ENCODE measurements at regions of chr3 and their contacts with region 1.

Region 1: GRCh38 chr3:58177747-58178527 is 32.8 kb downstream of the DNASE1L3 start:
- DNase-seq: peak; percentile 90
- ATAC-seq: peak; percentile 96
- H3K4me3 ChIP-seq: peak overlapping the region in 4 of 5 experiments; percentile 38 to 66 (median 56)
- H3K4me3 Mint-ChIP-seq: peak overlapping the region; percentile 86
- H3K27ac ChIP-seq: no peak overlapping the region
- H3K27ac Mint-ChIP-seq: peak overlapping the region; percentile 50
- H3K4me1 ChIP-seq: peaks cover 19 to 24% of the 10 kb centered on the region in 2 donors
- H3K4me1 Mint-ChIP-seq: peaks cover 27% of the 10 kb centered on the region
- H3K27me3 ChIP-seq: peaks cover 0 to 8% (median 3%) of the 10 kb centered on the region in 4 experiments
- H3K27me3 Mint-ChIP-seq: no peaks in the 10 kb centered on the region
- CTCF ChIP-seq: peak; percentile 88

Region 2: GRCh38 chr3:57752307-57752706 is 425.6 kb before region 1 on chr3:
- CTCF ChIA-PET with region 1: no interaction called
- POLR2A ChIA-PET with region 1: no interaction called
- intact Hi-C with region 1: no loop called
- DNase-seq: no peak
- ATAC-seq: no peak
- H3K4me3 ChIP-seq: no peak overlapping the region
- H3K4me3 Mint-ChIP-seq: no peak overlapping the region
- H3K27ac ChIP-seq: no peak overlapping the region
- H3K27ac Mint-ChIP-seq: no peak overlapping the region
- H3K4me1 ChIP-seq: peaks cover 7 to 10% of the 10 kb centered on the region in 2 donors
- H3K4me1 Mint-ChIP-seq: peaks cover 11% of the 10 kb centered on the region
- H3K27me3 ChIP-seq: no peaks in the 10 kb centered on the region
- H3K27me3 Mint-ChIP-seq: no peaks in the 10 kb centered on the region
- CTCF ChIP-seq: no peak

Region 3: DNA sequence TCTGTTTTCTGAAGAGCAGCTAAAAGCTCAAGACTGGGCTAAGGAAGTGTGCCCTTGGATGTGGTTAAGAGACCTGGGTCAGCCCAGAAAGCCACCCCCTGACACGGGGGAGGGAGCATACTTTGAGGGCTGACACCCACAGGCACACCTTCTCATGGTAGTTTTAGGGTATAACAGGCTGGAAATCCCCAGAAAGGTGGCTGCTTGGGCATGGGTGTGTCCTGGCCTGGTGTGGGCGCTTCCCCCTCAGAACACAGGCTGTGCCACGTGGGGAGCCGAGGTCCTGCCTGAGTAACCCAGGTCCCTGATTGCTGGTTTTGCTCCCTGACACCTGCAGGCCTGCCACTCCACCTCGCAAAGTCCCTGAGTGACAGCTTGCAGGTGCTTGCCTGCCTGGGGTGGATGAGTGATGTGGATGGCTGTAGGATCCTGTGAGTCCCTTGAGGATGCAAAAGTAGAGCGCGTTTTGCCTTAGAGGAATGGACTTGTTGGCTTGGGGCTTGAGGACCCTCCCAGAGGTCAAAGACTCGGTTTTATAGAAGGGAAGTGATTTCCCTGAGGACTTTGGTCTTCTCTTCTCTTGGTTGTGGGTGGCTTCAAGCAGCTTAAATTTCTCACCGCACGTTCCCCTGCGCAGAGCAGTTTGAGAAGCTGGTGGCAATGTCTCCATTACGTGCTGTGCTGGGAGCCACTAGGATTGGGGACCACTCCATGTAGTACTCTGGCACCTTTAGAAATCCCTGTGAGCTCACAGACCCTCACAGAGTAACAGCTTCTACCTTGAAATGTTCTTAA is 61.6 kb before region 1 on chr3:
- CTCF ChIA-PET with region 1: no interaction called
- POLR2A ChIA-PET with region 1: no interaction called
- intact Hi-C with region 1: loop called (anchors 10 kb)
- DNase-seq: peak; percentile 95
- ATAC-seq: peak; percentile 93
- H3K4me3 ChIP-seq: peak overlapping the region in 1 of 5 experiments; percentile 1
- H3K4me3 Mint-ChIP-seq: peak overlapping the region; percentile 77
- H3K27ac ChIP-seq: peak overlapping the region; percentile 80 to 89
- H3K27ac Mint-ChIP-seq: peak overlapping the region; percentile 95
- H3K4me1 ChIP-seq: peaks cover 62 to 74% of the 10 kb centered on the region in 2 donors
- H3K4me1 Mint-ChIP-seq: peaks cover 73% of the 10 kb centered on the region
- H3K27me3 ChIP-seq: no peaks in the 10 kb centered on the region
- H3K27me3 Mint-ChIP-seq: no peaks in the 10 kb centered on the region
- CTCF ChIP-seq: no peak

Region 4: DNA sequence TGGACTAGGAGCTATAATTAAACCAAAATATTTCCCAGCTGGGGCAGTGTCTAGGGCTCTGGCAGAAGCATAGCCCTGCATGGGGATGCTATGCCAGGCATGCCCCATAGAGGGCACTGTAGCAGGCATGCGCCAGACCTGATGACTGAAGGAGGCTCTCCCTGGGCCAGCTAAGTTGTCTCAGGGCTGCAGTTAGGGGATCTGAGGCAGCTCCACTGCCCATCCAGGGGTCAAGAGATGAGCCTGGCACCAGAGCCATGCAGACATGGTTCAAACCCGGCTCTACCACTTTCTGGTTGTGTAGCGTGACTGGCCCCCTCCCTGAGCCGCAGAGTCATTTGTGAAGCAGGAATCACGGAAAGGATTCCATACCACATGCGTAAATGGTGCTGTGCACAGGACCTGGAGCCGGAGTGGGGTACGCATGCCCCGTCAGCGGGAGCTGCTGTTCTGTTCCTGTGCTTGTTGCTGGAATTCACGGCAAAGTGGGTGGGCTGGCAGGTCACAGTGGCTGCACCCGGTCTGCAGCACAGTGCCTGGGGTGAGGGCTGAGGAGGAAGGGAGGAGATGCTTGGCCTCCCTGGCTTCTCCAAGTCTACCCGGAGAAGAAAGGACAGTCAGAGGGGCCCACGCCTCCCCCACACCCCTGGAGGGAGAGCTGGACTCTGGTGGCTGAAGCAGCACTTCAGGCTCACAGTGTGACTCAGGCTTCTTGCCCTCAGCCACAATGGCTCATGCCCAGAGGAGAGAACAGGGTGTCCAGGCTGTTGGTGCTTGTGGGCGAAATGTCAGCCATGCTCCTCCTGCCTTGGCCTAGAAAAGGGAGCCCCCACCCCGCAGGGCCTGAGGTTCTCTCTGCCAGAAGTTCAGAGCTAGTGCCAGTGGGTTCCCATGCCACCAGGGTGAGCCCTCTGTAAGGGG is 10.2 kb before region 1 on chr3:
- CTCF ChIA-PET with region 1: interaction called, 25 read pairs
- POLR2A ChIA-PET with region 1: no interaction called
- intact Hi-C with region 1: no loop called
- DNase-seq: peak; percentile 57
- ATAC-seq: peak; percentile 67
- H3K4me3 ChIP-seq: no peak overlapping the region
- H3K4me3 Mint-ChIP-seq: no peak overlapping the region
- H3K27ac ChIP-seq: no peak overlapping the region
- H3K27ac Mint-ChIP-seq: no peak overlapping the region
- H3K4me1 ChIP-seq: no peaks in the 10 kb centered on the region
- H3K4me1 Mint-ChIP-seq: no peaks in the 10 kb centered on the region
- H3K27me3 ChIP-seq: no peaks in the 10 kb centered on the region
- H3K27me3 Mint-ChIP-seq: no peaks in the 10 kb centered on the region
- CTCF ChIP-seq: peak; percentile 79

Region 5: GRCh38 chr3:58217209-58217811 is 39.4 kb after region 1 on chr3:
- CTCF ChIA-PET with region 1: interaction called, 336 read pairs
- POLR2A ChIA-PET with region 1: interaction called, 6 read pairs
- intact Hi-C with region 1: loop called (anchors 5 kb)
- DNase-seq: peak; percentile 84
- ATAC-seq: peak; percentile 60
- H3K4me3 ChIP-seq: peak overlapping the region in 4 of 5 experiments; percentile 34 to 61 (median 48)
- H3K4me3 Mint-ChIP-seq: peak overlapping the region; percentile 79
- H3K27ac ChIP-seq: peak overlapping the region in 1 of 2 donors; percentile 52
- H3K27ac Mint-ChIP-seq: peak overlapping the region; percentile 69
- H3K4me1 ChIP-seq: peaks cover 52 to 58% of the 10 kb centered on the region in 2 donors
- H3K4me1 Mint-ChIP-seq: peaks cover 49% of the 10 kb centered on the region
- H3K27me3 ChIP-seq: no peaks in the 10 kb centered on the region
- H3K27me3 Mint-ChIP-seq: no peaks in the 10 kb centered on the region
- CTCF ChIP-seq: peak; percentile 97

Region 6: GRCh38 chr3:58299839-58300516 is 122.0 kb after region 1 on chr3:
- CTCF ChIA-PET with region 1: interaction called, 334 read pairs
- POLR2A ChIA-PET with region 1: no interaction called
- intact Hi-C with region 1: no loop called
- DNase-seq: peak; percentile 50
- ATAC-seq: no peak
- H3K4me3 ChIP-seq: no peak overlapping the region
- H3K4me3 Mint-ChIP-seq: no peak overlapping the region
- H3K27ac ChIP-seq: no peak overlapping the region
- H3K27ac Mint-ChIP-seq: no peak overlapping the region
- H3K4me1 ChIP-seq: no peaks in the 10 kb centered on the region
- H3K4me1 Mint-ChIP-seq: no peaks in the 10 kb centered on the region
- H3K27me3 ChIP-seq: no peaks in the 10 kb centered on the region
- H3K27me3 Mint-ChIP-seq: no peaks in the 10 kb centered on the region
- CTCF ChIP-seq: peak; percentile 65

Region 7: GRCh38 chr3:58532794-58533220 is 354.9 kb after region 1 on chr3:
- CTCF ChIA-PET with region 1: interaction called, 3 read pairs
- POLR2A ChIA-PET with region 1: no interaction called
- intact Hi-C with region 1: loop called (anchors 1 kb)
- DNase-seq: peak; percentile 89
- ATAC-seq: peak; percentile 99
- H3K4me3 ChIP-seq: no peak overlapping the region
- H3K4me3 Mint-ChIP-seq: no peak overlapping the region
- H3K27ac ChIP-seq: no peak overlapping the region
- H3K27ac Mint-ChIP-seq: peak overlapping the region; percentile 7
- H3K4me1 ChIP-seq: peaks cover 6 to 8% of the 10 kb centered on the region in 2 donors
- H3K4me1 Mint-ChIP-seq: peaks cover 6% of the 10 kb centered on the region
- H3K27me3 ChIP-seq: no peaks in the 10 kb centered on the region
- H3K27me3 Mint-ChIP-seq: no peaks in the 10 kb centered on the region
- CTCF ChIP-seq: peak; percentile 91

Measured in B cell (primary cell).